HCT116 (cell line): ENCODE measurements at regions of chr11 and their contacts with region 1.

Region 1: GRCh38 chr11:14907411-14908213 is 15.6 kb upstream of the CYP2R1 start:
- DNase-seq: no peak
- ATAC-seq: peak; percentile 93
- H3K4me3 ChIP-seq: 0 out of 4 replicates have a peak overlapping the region, but pooled peaks of 1 of the 2 experiments have one; percentile 14
- H3K27ac ChIP-seq: no peak overlapping the region
- H3K4me1 ChIP-seq: peaks cover 3 to 12% of the 10 kb centered on the region in 2 experiments; a peak in 2 of 4 replicates
- H3K27me3 ChIP-seq: no peaks in the 10 kb centered on the region
- CTCF ChIP-seq: peak; percentile 70 to 92 (median 84); a peak in 5 of 6 replicates
- POLR2A ChIP-seq: peak; percentile 25
- RAD21 ChIP-seq: peak; percentile 81

Region 2: DNA sequence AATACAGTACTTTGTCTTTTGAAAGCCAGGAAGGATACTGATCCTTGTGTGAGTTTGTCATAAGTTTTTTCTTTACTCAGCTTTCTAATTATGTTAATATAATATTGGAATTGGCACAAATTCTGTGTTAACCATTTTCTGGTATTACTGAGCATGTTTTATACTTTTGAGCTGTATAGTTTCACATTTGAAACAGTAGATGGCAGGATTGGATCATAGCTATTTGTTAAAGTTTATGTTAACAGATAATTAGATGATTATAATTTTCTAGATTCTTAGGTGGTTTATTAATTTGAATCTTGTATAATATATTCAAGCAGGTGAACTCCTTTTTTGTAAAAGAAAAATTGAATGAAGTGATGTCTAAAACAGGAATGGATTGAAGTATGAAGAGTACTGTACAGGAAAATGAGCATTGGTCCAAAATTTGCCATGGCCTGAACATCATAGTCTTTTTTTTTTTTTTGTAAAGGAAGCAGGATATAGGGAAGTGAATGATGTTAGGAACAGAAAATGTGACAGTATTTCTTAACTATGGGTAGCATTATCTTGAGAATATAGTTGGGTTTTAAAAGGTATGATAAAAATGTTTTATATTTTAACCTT is 117.6 kb before region 1 on chr11:
- CTCF ChIA-PET with region 1: interaction called, 306 read pairs
- POLR2A ChIA-PET with region 1: interaction called, 13 read pairs
- RAD21 ChIA-PET with region 1: interaction called, 25 to 30 read pairs
- intact Hi-C with region 1: loop called (anchors 1 kb)
- DNase-seq: no peak
- ATAC-seq: peak; percentile 46; the same call in 1 of the 2 replicates
- H3K4me3 ChIP-seq: no peak overlapping the region
- H3K27ac ChIP-seq: no peak overlapping the region
- H3K4me1 ChIP-seq: no peaks in the 10 kb centered on the region
- H3K27me3 ChIP-seq: no peaks in the 10 kb centered on the region
- CTCF ChIP-seq: peak; percentile 33 to 64 (median 64); a peak in 5 of 6 replicates
- POLR2A ChIP-seq: no peak
- RAD21 ChIP-seq: peak; percentile 72

Region 3: DNA sequence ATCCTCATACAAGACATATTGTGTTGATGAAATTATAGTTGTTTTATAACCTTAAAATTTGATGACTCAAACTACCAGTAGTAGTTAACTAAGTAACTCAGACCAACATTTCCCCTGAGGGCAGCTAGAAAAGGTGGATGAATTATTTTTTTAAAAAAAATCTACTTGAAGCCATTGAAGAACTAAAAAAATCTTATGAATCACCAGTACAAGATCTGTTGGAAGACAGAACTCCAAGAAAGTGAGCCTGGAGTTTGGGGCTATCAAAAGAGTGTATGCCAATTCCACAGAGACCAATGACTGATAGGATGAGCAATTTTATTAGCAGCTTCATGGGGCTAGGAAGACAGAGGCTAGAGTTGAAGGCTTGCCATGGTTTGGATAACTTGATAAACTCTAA is 88.0 kb before region 1 on chr11:
- CTCF ChIA-PET with region 1: no interaction called
- POLR2A ChIA-PET with region 1: no interaction called
- RAD21 ChIA-PET with region 1: no interaction called
- intact Hi-C with region 1: no loop called
- DNase-seq: no peak
- ATAC-seq: no peak
- H3K4me3 ChIP-seq: no peak overlapping the region
- H3K27ac ChIP-seq: no peak overlapping the region
- H3K4me1 ChIP-seq: no peaks in the 10 kb centered on the region
- H3K27me3 ChIP-seq: no peaks in the 10 kb centered on the region
- CTCF ChIP-seq: no peak
- POLR2A ChIP-seq: no peak
- RAD21 ChIP-seq: no peak

Region 4: DNA sequence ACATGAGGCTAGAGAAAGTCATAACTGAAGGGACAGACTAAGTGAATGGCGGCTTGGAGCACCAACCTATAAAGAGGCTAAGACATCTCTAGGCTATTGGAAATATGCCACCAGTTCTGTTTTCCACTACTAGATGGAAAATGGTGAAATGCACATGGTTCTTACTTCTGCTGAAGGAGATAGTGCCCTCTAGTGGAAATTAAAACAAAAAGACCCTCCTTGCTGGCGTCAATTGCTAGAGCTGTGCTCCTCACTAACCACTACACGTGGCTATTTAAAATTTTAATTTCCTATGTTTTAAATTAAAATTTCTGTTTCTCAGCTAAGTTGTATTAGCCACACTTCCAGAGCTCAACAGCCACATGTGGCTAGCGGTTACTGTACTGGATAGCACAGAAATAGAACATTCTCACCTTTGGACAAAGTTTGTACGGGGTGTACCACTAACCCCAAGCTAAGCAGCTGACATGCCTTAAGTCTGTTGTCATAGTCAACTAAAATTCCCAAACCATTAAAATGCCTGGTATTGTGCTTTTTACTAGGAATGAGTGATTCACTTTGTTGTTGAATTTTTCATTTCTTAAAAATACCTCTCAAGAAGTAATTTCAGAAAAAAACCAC is 98.6 kb after region 1 on chr11:
- CTCF ChIA-PET with region 1: interaction called, 24 read pairs
- POLR2A ChIA-PET with region 1: no interaction called
- RAD21 ChIA-PET with region 1: interaction called, 3 to 8 read pairs
- intact Hi-C with region 1: no loop called
- DNase-seq: peak; percentile 47
- ATAC-seq: peak; percentile 83
- H3K4me3 ChIP-seq: no peak overlapping the region
- H3K27ac ChIP-seq: no peak overlapping the region
- H3K4me1 ChIP-seq: no peaks in the 10 kb centered on the region
- H3K27me3 ChIP-seq: no peaks in the 10 kb centered on the region
- CTCF ChIP-seq: peak; percentile 48 to 59 (median 56); a peak in 5 of 6 replicates
- POLR2A ChIP-seq: no peak
- RAD21 ChIP-seq: peak; percentile 62

Region 5: DNA sequence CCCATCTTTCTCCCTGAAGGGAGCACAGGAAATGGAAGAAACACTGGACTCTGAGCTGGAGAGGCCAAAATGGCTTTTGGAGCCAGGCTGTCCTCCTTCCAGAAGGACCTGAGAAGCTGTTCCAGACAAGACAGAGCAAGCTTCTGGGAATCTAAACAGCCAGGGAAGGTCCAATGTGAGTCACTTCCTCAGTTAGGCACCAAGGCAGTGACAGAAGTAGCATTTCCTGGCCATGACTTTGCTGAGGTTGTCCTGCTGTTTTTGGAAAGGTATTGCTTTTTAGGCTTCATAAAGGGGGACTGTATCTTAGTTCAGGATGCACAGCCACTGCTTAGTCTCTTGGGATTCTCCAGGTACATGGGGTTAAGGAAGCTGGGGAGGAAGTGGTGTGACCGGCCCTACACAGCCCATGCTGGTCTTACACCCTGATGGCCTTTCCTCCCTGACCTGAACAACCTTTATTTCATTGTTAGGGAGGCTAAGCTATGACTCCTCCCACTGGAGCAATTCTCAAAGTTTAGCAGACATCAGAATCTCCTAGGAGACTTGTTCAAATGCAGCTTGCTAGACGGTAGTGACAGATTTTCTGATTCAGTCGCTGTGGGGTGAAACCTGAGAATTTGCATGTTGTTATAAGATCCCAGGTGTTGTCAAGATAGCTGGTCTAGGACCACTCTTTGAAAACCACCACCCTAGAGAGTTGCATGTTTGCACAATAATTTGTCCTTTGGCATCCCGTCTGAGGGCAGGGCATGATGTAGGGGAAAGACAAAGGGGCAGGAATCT is 200.3 kb after region 1 on chr11:
- CTCF ChIA-PET with region 1: interaction called, 39 read pairs
- POLR2A ChIA-PET with region 1: no interaction called
- RAD21 ChIA-PET with region 1: no interaction called
- intact Hi-C with region 1: no loop called
- DNase-seq: no peak
- ATAC-seq: no peak
- H3K4me3 ChIP-seq: no peak overlapping the region
- H3K27ac ChIP-seq: no peak overlapping the region
- H3K4me1 ChIP-seq: peaks cover 22 to 37% of the 10 kb centered on the region in 2 experiments
- H3K27me3 ChIP-seq: no peaks in the 10 kb centered on the region
- CTCF ChIP-seq: no peak
- POLR2A ChIP-seq: no peak
- RAD21 ChIP-seq: no peak

Region 6: DNA sequence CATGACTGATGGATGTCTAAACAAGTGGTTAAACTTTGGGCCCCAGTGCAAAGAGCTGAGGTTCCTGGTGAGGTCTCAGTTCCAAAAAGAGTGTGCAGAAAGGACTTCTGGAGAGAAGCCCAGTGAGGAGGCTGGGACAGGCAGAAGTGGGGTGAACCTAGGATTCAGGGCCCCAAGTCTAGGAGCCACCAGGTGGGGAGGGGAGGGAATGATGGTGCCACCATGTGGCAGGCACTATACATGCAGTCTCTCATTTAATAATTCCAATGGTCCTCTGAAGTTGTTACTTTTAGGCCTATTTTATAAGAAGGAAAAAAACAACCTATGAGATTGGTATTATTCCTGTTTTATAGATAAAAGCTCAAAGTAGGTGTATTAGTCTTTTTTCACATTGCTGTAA is 309.1 kb after region 1 on chr11:
- CTCF ChIA-PET with region 1: interaction called, 61 read pairs
- POLR2A ChIA-PET with region 1: no interaction called
- RAD21 ChIA-PET with region 1: no interaction called
- intact Hi-C with region 1: no loop called
- DNase-seq: peak; percentile 7
- ATAC-seq: peak; percentile 87
- H3K4me3 ChIP-seq: no peak overlapping the region
- H3K27ac ChIP-seq: no peak overlapping the region
- H3K4me1 ChIP-seq: no peaks in the 10 kb centered on the region
- H3K27me3 ChIP-seq: no peaks in the 10 kb centered on the region
- CTCF ChIP-seq: peak; percentile 59 to 71 (median 70); a peak in 5 of 6 replicates
- POLR2A ChIP-seq: no peak
- RAD21 ChIP-seq: peak; percentile 54